GM23248 (cell line): ENCODE measurements at regions of chr20 and their contacts with region 1.

Region 1: DNA sequence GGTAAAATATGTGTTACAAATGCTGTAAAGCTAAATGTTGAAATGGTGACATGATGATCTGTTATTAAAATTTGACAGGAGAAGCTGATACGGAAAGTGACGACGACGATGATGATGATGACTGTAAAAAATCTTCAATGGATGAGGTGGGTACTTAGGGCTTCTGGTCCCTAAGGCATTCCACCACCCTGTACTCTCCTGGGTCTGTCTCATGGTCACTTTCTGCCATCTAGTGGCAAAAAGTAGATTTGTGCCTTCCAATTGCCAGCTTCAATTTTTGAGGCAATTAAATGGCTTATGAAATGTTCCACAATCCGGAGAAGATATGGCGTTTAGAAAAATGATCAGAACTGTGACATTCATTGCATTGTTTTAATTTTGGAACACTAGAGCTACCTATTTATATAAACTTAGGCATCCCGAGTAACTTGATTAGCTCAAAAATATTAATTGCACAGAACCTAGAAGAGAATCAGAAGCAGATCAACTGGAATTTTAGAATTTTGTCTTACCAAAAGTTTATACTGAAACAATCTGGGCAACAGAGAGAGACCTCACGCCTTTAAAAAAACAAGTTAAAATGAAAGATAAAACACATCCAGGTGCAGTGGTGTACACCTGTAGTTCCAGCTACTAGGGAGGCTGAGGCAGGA is 346.5 kb upstream of the PLCB4 start:
- DNase-seq: peak; percentile 76
- H3K4me3 ChIP-seq: no peak overlapping the region
- H3K27ac ChIP-seq: no peak overlapping the region
- H3K4me1 ChIP-seq: peaks cover 11% of the 10 kb centered on the region
- H3K27me3 ChIP-seq: no peaks in the 10 kb centered on the region

Region 2: DNA sequence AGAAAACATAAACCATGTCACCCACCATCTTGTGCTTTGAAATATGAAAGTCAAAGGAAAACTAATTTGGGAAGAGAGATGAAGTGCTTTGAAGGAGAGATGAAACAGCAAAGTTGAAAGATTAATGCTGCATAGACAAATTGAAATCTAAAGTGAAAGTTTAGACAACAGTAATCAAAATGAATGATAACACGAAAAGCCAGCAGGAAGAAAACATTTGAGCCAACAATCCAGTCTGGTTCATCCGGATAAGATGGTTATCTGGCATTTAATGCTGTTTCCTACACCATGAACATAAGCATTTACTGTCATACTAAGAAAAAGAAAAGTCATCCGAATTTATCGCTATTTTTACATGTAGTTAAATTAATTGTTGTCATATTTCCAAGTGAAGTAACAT is 782.7 kb before region 1 on chr20:
- in situ Hi-C with region 1: loop called (anchors 10 kb)
- DNase-seq: no peak
- H3K4me3 ChIP-seq: no peak overlapping the region
- H3K27ac ChIP-seq: no peak overlapping the region
- H3K4me1 ChIP-seq: peaks cover 7% of the 10 kb centered on the region; the same call in 1 of the 2 replicates
- H3K27me3 ChIP-seq: no peaks in the 10 kb centered on the region

Region 3: DNA sequence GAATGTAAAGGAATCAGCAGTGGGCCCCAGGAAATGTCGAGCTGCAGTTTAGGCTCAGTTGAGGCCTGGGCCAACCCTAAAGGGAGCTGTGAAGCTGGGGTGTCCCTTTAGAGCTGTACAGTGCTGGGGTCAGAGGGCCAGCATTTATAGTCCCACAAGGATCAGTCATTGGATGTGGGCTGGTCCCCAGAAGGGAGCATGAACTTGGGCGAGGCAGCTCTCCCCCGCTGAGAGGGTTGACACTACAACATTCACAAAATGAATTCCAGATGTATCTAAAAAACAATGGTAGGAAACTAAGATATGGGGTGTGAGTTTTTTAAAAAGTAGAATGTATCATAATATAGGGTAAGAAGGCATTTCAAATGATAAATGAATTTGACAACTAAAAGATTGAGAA is 673.1 kb before region 1 on chr20:
- in situ Hi-C with region 1: loop called (anchors 5 kb)
- DNase-seq: peak; percentile 22
- H3K4me3 ChIP-seq: no peak overlapping the region
- H3K27ac ChIP-seq: no peak overlapping the region
- H3K4me1 ChIP-seq: 0 out of 2 replicates have a peak, but pooled peaks cover 4% of the 10 kb centered on the region
- H3K27me3 ChIP-seq: no peaks in the 10 kb centered on the region

Region 4: GRCh38 chr20:8131598-8132483 is 590.6 kb before region 1 on chr20 and contains the start of gene PLCB1:
- in situ Hi-C with region 1: loop called (anchors 10 kb)
- DNase-seq: peak; percentile 93
- H3K4me3 ChIP-seq: peak within 1 kb of the TSS; percentile 79
- H3K27ac ChIP-seq: no peak within 1 kb of the TSS
- H3K4me1 ChIP-seq: no peaks in the 10 kb centered on the region
- H3K27me3 ChIP-seq: peaks cover 4% of the 10 kb centered on the region; the same call in 1 of the 2 replicates
- total RNA-seq, gene PLCB1: 12.8 and 14.4 TPM in 2 replicates